BJ (cell line): ENCODE measurements at regions of chr7 and their contacts with region 1.

Region 1: GRCh38 chr7:27251652-27252590 is 9.3 kb downstream of the EVX1 start:
- DNase-seq: no peak
- H3K4me3 ChIP-seq: no peak overlapping the region
- H3K27me3 ChIP-seq: peaks cover 38% of the 10 kb centered on the region
- CTCF ChIP-seq: no peak

Region 2: GRCh38 chr7:27303026-27303425 is 51.1 kb after region 1 on chr7:
- CTCF ChIA-PET with region 1: no interaction called
- POLR2A ChIA-PET with region 1: interaction called, 19 read pairs
- DNase-seq: no peak
- H3K4me3 ChIP-seq: no peak overlapping the region
- H3K27me3 ChIP-seq: peaks cover 3% of the 10 kb centered on the region; the same call in 1 of the 2 replicates
- CTCF ChIP-seq: no peak

Region 3: GRCh38 chr7:27359181-27360125 is 107.5 kb after region 1 on chr7:
- CTCF ChIA-PET with region 1: no interaction called
- POLR2A ChIA-PET with region 1: no interaction called
- DNase-seq: no peak
- H3K4me3 ChIP-seq: no peak overlapping the region
- H3K27me3 ChIP-seq: peaks cover 2% of the 10 kb centered on the region; the same call in 1 of the 2 replicates
- CTCF ChIP-seq: no peak